Panc1 (cell line): ENCODE measurements at regions of chr12 and their contacts with region 1.

Region 1: GRCh38 chr12:115632308-115632707 is 645.2 kb downstream of the MED13L start:
- DNase-seq: no peak
- ATAC-seq: no peak
- H3K4me3 ChIP-seq: no peak overlapping the region
- H3K27ac ChIP-seq: no peak overlapping the region
- H3K4me1 ChIP-seq: no peaks in the 10 kb centered on the region
- H3K27me3 ChIP-seq: no peaks in the 10 kb centered on the region
- CTCF ChIP-seq: no peak

Region 2: GRCh38 chr12:114649585-114649984 is 982.7 kb before region 1 on chr12:
- CTCF ChIA-PET with region 1: interaction called, 10 read pairs
- POLR2A ChIA-PET with region 1: no interaction called
- in situ Hi-C with region 1: no loop called
- intact Hi-C with region 1: no loop called
- DNase-seq: no peak
- ATAC-seq: no peak
- H3K4me3 ChIP-seq: no peak overlapping the region
- H3K27ac ChIP-seq: no peak overlapping the region
- H3K4me1 ChIP-seq: no peaks in the 10 kb centered on the region
- H3K27me3 ChIP-seq: no peaks in the 10 kb centered on the region
- CTCF ChIP-seq: no peak

Region 3: DNA sequence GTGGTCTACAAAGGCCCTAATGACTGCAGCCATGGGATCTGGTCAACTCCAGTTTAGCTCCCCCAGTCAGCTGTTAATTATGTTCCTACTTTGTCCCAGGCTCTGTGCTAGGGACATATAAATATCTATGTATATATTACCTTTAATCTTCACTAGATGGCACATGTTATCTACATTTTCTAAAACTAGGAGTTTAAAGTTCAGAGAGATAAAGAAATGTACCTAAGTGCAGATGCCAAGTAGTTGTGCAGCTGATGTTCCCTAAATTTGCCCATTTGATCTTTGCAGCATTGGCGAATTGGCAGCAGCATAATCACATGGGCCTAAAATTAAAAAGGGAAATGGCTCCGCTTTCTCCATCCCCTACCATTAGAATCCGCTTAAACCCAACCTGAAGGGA is 104.1 kb after region 1 on chr12:
- CTCF ChIA-PET with region 1: no interaction called
- POLR2A ChIA-PET with region 1: no interaction called
- in situ Hi-C with region 1: no loop called
- intact Hi-C with region 1: no loop called
- DNase-seq: no peak
- ATAC-seq: no peak
- H3K4me3 ChIP-seq: no peak overlapping the region
- H3K27ac ChIP-seq: no peak overlapping the region
- H3K4me1 ChIP-seq: no peaks in the 10 kb centered on the region
- H3K27me3 ChIP-seq: peaks cover 5% of the 10 kb centered on the region
- CTCF ChIP-seq: no peak